HepG2 (cell line): ENCODE measurements at regions of chr2 and their contacts with region 1.

Region 1: GRCh38 chr2:19851116-19851695 is 50.6 kb downstream of the TTC32 start:
- DNase-seq: no peak
- ATAC-seq: peak; percentile 84
- H3K4me3 ChIP-seq: no peak overlapping the region
- H3K27ac ChIP-seq: no peak overlapping the region
- H3K4me1 ChIP-seq: peaks cover 27% of the 10 kb centered on the region
- H3K27me3 ChIP-seq: peaks cover 0 to 3% of the 10 kb centered on the region in 2 experiments; a peak in 3 of 5 replicates
- CTCF ChIP-seq: peak; percentile 58
- EP300 ChIP-seq: no peak
- POLR2A ChIP-seq: no peak
- RAD21 ChIP-seq: no peak

Region 2: GRCh38 chr2:19746611-19747309 is 104.4 kb before region 1 on chr2:
- CTCF ChIA-PET with region 1: no interaction called
- POLR2A ChIA-PET with region 1: no interaction called
- in situ Hi-C with region 1: loop called (anchors 10 kb)
- intact Hi-C with region 1: no loop called
- DNase-seq: peak; percentile 19
- ATAC-seq: peak; percentile 75
- H3K4me3 ChIP-seq: no peak overlapping the region
- H3K27ac ChIP-seq: no peak overlapping the region
- H3K4me1 ChIP-seq: peaks cover 14% of the 10 kb centered on the region
- H3K27me3 ChIP-seq: peaks cover 4 to 17% of the 10 kb centered on the region in 2 experiments; a peak in 4 of 5 replicates
- CTCF ChIP-seq: peak; percentile 79
- EP300 ChIP-seq: no peak
- POLR2A ChIP-seq: no peak
- RAD21 ChIP-seq: peak; percentile 46